Activated naive CD8-positive, alpha-beta T cell treated with anti-CD3 and anti-CD28 coated beads, Interleukin-2, amount 10 ng/mL, durations not matched to agents 7 days and 5 days (primary cell): ENCODE measurements at regions of chr5 and their contacts with region 1.

Region 1: DNA sequence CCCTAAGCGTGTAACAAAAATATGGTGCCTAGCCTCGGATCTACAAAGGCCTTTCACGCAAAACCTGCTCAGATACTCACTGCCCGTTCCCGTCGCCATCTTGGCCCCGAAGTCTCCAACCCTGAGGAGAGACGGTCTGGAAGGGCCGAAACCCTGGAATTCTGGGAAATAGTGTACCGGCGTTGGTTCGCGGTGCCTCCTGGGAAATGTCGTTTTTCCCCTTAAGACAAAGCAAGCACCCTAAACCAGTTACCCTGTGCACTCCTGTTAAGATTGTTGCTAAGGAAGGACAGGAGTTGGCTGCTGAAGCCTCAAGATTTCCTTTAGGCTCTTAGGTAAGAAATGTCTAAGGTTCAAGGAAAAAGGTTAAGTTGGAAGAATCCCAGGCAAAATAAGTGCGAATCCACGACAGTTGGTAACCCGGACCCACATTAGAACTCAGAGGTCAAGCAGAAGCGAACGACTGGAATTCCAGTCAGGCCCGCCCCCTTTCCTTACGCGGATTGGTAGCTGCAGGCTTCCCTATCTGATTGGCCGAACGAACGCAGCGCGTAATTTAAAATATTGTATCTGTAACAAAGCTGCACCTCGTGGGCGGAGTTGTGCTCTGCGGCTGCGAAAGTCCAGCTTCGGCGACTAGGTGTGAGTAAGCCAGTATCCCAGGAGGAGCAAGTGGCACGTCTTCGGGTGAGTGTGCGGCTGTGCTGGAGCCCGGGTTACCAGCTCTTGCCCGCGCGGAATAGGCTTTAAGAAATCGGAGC is at the starts of genes BRD8 and KIF20A:
- DNase-seq: peak; percentile 82
- ATAC-seq: peak; percentile 86
- H3K4me3 Mint-ChIP-seq: no peak within 1 kb of the TSS
- H3K27ac Mint-ChIP-seq: peak within 1 kb of the TSS; percentile 77
- H3K4me1 Mint-ChIP-seq: peaks cover 24% of the 10 kb centered on the region
- H3K27me3 Mint-ChIP-seq: no peaks in the 10 kb centered on the region
- total RNA-seq, gene BRD8: 75.5 to 76.8 TPM
- total RNA-seq, gene KIF20A: 51.0 to 52.4 TPM

Region 2: DNA sequence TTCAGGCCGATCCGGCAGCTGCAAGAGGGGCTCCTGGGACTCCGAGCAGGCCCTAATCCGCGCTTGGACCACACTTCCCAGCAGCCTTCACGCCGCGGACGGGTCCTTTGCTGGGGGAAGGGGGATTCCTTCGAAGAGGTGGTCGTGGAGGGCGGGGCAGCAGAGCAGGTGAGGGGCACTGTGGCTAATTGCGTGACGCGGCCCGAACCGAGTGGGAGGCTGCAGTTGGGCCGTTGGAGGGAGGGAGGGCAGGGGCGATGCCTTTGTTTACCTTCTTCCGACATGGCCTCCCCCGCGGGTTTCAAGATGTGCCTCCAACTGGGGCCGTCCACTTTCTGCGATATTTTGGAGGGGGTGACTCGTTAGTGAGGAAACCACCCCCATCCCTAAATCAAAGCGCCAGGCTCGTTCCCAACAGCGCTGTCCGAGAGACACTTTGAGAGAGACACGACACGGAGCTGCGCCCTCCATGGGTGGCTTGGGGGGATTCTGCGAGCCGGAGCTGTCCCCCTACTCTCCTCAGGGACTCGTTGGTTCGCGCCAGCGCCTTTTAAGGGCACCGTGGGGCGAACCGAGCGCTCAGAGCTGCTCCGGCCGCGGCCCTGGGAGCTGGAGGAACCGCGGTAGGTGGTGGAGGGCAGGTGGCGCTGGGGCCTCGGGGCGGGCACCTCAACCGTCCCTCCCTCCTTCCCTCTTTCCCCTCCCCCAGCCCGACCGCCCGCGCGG is 159.2 kb after region 1 on chr5 and contains the start of gene FAM53C:
- POLR2A ChIA-PET with region 1: interaction called, 15 read pairs
- DNase-seq: peak; percentile 97
- ATAC-seq: peak; percentile 88
- H3K4me3 Mint-ChIP-seq: peak within 1 kb of the TSS; percentile 90
- H3K27ac Mint-ChIP-seq: peak within 1 kb of the TSS; percentile 98
- H3K4me1 Mint-ChIP-seq: peaks cover 26% of the 10 kb centered on the region
- H3K27me3 Mint-ChIP-seq: peaks cover 2% of the 10 kb centered on the region
- total RNA-seq, gene FAM53C: 29.3 to 31.2 TPM